Endothelial cell of umbilical vein (primary cell): ENCODE measurements at regions of chr10 and their contacts with region 1.

Region 1: GRCh38 chr10:28600056-28600455 is 67.1 kb downstream of the WAC start:
- DNase-seq: no peak
- H3K4me3 ChIP-seq: no peak overlapping the region
- H3K27ac ChIP-seq: no peak overlapping the region
- H3K4me1 ChIP-seq: no peaks in the 10 kb centered on the region
- H3K27me3 ChIP-seq: no peaks in the 10 kb centered on the region
- CTCF ChIP-seq: no peak
- POLR2A ChIP-seq: no peak

Region 2: DNA sequence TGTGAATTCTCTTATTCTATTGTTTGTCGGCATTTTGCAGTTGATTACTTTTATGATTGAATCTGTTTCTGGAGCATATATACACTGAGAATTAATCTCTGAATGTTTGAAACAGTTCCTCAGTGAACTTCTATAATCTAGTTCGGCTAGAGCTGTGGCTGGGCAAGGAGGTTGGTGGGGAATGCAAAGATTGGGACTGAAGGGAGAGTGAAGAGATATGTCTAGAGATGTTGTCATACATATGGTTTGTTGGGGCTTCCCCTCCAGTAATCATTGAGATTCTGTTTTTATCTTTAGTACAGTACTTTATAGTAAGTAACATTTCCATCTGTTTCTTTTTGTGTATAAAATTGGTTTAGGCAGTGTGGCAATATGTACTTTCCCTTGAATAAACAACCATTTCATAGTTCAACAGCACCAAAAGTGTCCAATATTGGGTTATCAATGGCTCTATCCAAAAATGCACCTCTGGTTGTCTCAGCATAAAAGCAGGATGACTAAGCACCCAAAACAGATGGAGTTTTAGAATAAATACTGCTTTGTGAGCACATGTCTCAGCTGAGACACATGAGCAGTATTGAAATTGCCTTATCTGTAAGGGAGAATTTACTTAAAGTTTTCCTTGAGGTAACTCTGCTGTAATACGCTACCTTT is 30.4 kb before region 1 on chr10:
- CTCF ChIA-PET with region 1: no interaction called
- POLR2A ChIA-PET with region 1: no interaction called
- dilution Hi-C with region 1: no loop called
- intact Hi-C with region 1: no loop called
- DNase-seq: no peak
- H3K4me3 ChIP-seq: no peak overlapping the region
- H3K27ac ChIP-seq: no peak overlapping the region
- H3K4me1 ChIP-seq: peaks cover 8% of the 10 kb centered on the region
- H3K27me3 ChIP-seq: no peaks in the 10 kb centered on the region
- CTCF ChIP-seq: no peak
- POLR2A ChIP-seq: no peak

Region 3: DNA sequence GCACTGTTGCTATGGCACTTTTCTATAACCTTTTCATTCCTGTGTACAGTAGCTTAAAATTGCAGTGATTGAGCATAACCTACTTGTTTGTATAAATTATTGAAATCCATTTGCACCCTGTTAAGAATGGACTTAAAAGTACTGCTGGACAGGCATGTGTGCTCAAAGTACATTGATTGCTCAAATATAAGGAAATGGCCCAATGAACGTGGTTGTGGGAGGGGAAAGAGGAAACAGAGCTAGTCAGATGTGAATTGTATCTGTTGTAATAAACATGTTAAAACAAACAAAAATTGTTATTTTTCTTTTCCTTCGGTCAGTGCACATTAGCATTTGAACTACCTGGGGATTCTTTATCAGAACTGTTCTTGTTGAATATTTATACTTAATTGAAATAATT is 20.2 kb after region 1 on chr10:
- CTCF ChIA-PET with region 1: interaction called, 5 read pairs
- POLR2A ChIA-PET with region 1: no interaction called
- dilution Hi-C with region 1: no loop called
- intact Hi-C with region 1: loop called (anchors 2 kb)
- DNase-seq: no peak
- H3K4me3 ChIP-seq: no peak overlapping the region
- H3K27ac ChIP-seq: no peak overlapping the region
- H3K4me1 ChIP-seq: no peaks in the 10 kb centered on the region
- H3K27me3 ChIP-seq: no peaks in the 10 kb centered on the region
- CTCF ChIP-seq: no peak
- POLR2A ChIP-seq: no peak